Heart right ventricle (tissue), 16 donors: ENCODE measurements at regions of chr21 and their contacts with region 1.

Region 1: GRCh38 chr21:25539606-25540005 is 67.7 kb downstream of the MRPL39 start:
- DNase-seq: no peak
- ATAC-seq: no peak
- H3K4me3 ChIP-seq: no peak overlapping the region
- H3K27ac ChIP-seq: no peak overlapping the region
- H3K4me1 ChIP-seq: no peaks in the 10 kb centered on the region
- H3K27me3 ChIP-seq: no peaks in the 10 kb centered on the region
- CTCF ChIP-seq: no peak

Region 2: DNA sequence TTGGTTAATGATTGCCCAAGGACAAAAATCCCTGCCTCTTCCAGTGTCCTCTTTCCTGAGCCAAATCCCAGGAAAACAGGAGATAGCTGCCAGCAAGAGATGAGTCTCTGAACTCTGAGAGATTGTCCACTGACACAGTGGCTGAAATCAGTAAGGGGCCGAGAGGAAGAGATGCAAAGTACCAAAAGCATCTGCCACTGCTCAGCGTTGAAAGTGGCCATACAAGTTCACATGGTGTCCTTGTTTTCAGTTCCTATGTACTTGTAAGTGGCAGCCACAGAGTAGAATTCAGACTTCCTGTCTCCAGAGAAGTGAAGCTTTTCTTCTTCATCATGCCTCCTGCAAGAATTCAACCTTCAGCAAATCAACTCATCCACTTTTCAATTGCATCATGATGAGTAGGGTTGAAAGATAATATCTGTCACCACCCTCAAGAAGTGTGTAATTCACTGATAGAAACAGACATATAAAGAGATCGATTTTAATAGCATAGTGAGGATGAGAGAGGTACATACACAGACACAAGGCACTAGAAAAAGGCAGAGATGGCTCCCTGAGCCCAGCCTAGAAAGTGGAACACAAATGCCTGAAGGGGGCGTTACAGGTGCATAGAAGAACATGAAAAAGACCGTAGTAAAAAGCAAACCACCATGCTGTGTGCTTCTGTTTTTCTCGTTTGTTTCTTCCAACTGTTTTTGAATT is 118.1 kb before region 1 on chr21:
- intact Hi-C with region 1: loop called in 1 of 10 experiments (anchors 10 kb)
- DNase-seq: peak in 1 of 2 donors; percentile 17
- ATAC-seq: peak in 6 of 8 donors; percentile 33 to 56 (median 50)
- H3K4me3 ChIP-seq: no peak overlapping the region
- H3K27ac ChIP-seq: no peak overlapping the region
- H3K4me1 ChIP-seq: peaks cover 0 to 8% (median 0%) of the 10 kb centered on the region in 9 donors
- H3K27me3 ChIP-seq: peaks cover 0 to 23% (median 0%) of the 10 kb centered on the region in 7 donors
- CTCF ChIP-seq: peak in 7 of 9 donors; percentile 37 to 72 (median 56)

Region 3: GRCh38 chr21:25501996-25502665 is 37.5 kb before region 1 on chr21:
- intact Hi-C with region 1: no loop called
- DNase-seq: no peak
- ATAC-seq: peak in 1 of 8 donors; percentile 15
- H3K4me3 ChIP-seq: no peak overlapping the region
- H3K27ac ChIP-seq: no peak overlapping the region
- H3K4me1 ChIP-seq: peaks cover 0 to 9% (median 0%) of the 10 kb centered on the region in 9 donors
- H3K27me3 ChIP-seq: no peaks in the 10 kb centered on the region
- CTCF ChIP-seq: no peak

Region 4: GRCh38 chr21:25790122-25790877 is 250.7 kb after region 1 on chr21:
- intact Hi-C with region 1: no loop called
- DNase-seq: no peak
- ATAC-seq: peak in 7 of 8 donors; percentile 53 to 78 (median 68)
- H3K4me3 ChIP-seq: peak overlapping the region in 9 of 10 donors; percentile 8 to 47 (median 35)
- H3K27ac ChIP-seq: peak overlapping the region in 5 of 10 donors; percentile 4 to 48 (median 18)
- H3K4me1 ChIP-seq: peaks cover 0 to 11% (median 8%) of the 10 kb centered on the region in 9 donors
- H3K27me3 ChIP-seq: peaks cover 0 to 12% (median 0%) of the 10 kb centered on the region in 7 donors
- CTCF ChIP-seq: peak in 8 of 9 donors; percentile 15 to 57 (median 48)